B cell (primary cell): ENCODE measurements at regions of chr16 and their contacts with region 1.

Region 1: DNA sequence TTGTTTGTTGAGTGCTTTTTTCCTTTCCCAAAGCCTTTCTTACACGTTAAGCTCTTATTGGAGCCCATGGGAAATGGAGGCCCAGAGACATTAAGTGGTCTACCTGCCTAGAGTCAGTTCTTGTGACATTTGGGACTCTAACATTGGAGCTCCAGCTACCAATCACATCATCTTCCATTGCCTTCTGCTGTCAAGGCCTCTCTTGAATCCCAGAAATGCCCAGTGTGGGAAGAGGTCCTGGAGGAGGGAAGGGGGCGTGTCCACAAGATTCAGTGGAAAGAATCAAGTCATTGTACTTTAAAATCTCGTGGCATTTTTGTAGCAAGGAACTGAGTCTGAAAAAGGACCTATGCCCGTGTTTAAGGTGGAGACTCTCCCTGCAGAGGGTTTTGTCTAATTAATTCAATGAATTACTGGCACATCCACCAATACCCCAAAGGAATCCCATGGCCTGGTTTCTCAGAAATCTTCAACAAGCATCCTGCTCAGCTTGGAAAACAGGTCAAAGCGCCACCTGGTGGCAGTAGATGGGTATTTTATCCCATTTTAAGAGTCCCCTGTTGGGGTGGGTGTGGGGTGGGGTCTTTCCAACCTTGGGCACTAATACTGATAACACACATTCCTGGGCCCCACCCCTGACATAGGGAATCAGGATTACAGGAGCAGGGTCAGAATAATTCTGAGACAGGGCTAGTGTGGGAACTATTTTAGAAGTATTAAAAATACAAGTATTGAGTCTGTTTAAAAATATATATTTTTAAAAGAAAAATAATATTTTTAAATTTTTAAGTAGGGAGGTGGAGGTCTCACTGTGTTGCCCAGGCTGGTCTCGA is 24.6 kb downstream of the GPT2 start:
- DNase-seq: peak; percentile 72
- ATAC-seq: peak; percentile 37
- H3K4me3 ChIP-seq: no peak overlapping the region
- H3K4me3 Mint-ChIP-seq: no peak overlapping the region
- H3K27ac ChIP-seq: no peak overlapping the region
- H3K27ac Mint-ChIP-seq: peak overlapping the region; percentile 74
- H3K4me1 ChIP-seq: peaks cover 40 to 63% of the 10 kb centered on the region in 2 donors
- H3K4me1 Mint-ChIP-seq: peaks cover 49% of the 10 kb centered on the region
- H3K27me3 ChIP-seq: no peaks in the 10 kb centered on the region
- H3K27me3 Mint-ChIP-seq: no peaks in the 10 kb centered on the region
- CTCF ChIP-seq: peak; percentile 85

Region 2: GRCh38 chr16:46700048-46700447 is 208.7 kb before region 1 on chr16:
- CTCF ChIA-PET with region 1: no interaction called
- POLR2A ChIA-PET with region 1: interaction called, 10 read pairs
- intact Hi-C with region 1: no loop called
- DNase-seq: no peak
- ATAC-seq: no peak
- H3K4me3 ChIP-seq: no peak overlapping the region
- H3K4me3 Mint-ChIP-seq: no peak overlapping the region
- H3K27ac ChIP-seq: no peak overlapping the region
- H3K27ac Mint-ChIP-seq: no peak overlapping the region
- H3K4me1 ChIP-seq: no peaks in the 10 kb centered on the region
- H3K4me1 Mint-ChIP-seq: no peaks in the 10 kb centered on the region
- H3K27me3 ChIP-seq: no peaks in the 10 kb centered on the region
- H3K27me3 Mint-ChIP-seq: no peaks in the 10 kb centered on the region
- CTCF ChIP-seq: no peak

Region 3: DNA sequence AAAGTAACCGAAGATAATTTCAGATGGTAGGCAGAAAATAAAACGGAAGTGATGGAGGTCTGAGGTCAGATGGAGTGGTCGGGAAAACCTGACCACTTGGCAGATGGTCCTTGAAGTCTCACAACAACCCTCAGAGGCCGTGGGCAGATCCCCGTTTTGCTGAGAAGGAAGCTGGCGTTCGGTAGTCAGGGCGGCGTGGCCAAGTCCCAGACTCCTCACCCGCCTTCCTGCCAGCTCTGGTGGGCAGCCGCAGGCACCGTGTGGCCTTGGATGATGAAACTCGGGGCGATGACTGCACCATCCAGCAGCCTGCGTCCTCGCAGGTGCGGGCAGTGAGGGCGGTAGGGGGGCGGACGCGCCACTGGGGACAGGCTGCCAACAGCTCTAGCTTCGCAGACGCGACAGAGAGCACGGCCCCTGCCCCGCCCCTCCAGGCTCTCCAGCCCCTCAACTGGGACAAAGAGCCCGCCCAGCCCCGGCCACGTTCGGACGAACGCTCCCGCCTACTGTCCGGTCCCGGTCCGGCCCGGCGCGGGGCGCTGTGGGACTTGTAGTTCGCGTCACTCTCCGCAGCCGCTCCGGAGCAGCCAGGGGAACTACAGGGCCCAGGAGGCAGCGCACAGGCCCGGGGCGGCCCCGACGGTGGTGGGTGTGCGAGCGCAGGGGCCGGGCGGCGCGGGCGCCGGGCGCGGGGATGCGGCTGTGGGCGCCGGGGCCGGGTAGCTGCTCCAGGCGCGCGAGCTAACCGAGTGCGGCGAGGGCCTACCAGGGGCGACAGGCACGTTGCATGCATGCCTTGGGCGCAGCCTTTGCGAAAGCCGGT is 24.9 kb before region 1 on chr16 and contains the start of gene GPT2:
- CTCF ChIA-PET with region 1: interaction called, 45 read pairs
- POLR2A ChIA-PET with region 1: interaction called, 3 read pairs
- intact Hi-C with region 1: loop called (anchors 1 kb)
- DNase-seq: peak; percentile 83
- ATAC-seq: peak; percentile 95
- H3K4me3 ChIP-seq: peak within 1 kb of the TSS; percentile 48 to 84 (median 72)
- H3K4me3 Mint-ChIP-seq: peak within 1 kb of the TSS; percentile 89
- H3K27ac ChIP-seq: no peak within 1 kb of the TSS
- H3K27ac Mint-ChIP-seq: peak within 1 kb of the TSS; percentile 67
- H3K4me1 ChIP-seq: peaks cover 9 to 11% of the 10 kb centered on the region in 2 donors
- H3K4me1 Mint-ChIP-seq: peaks cover 18% of the 10 kb centered on the region
- H3K27me3 ChIP-seq: peaks cover 0 to 5% (median 2%) of the 10 kb centered on the region in 4 experiments
- H3K27me3 Mint-ChIP-seq: no peaks in the 10 kb centered on the region
- CTCF ChIP-seq: no peak
- total RNA-seq, gene GPT2: 9.9 and 11.0 TPM in 2 replicates

Region 4: GRCh38 chr16:46929378-46930332 is 20.9 kb after region 1 on chr16:
- CTCF ChIA-PET with region 1: interaction called, 27 read pairs
- POLR2A ChIA-PET with region 1: no interaction called
- intact Hi-C with region 1: no loop called
- DNase-seq: peak; percentile 76
- ATAC-seq: peak; percentile 73
- H3K4me3 ChIP-seq: no peak overlapping the region
- H3K4me3 Mint-ChIP-seq: no peak overlapping the region
- H3K27ac ChIP-seq: no peak overlapping the region
- H3K27ac Mint-ChIP-seq: no peak overlapping the region
- H3K4me1 ChIP-seq: peaks cover 5 to 18% of the 10 kb centered on the region in 2 donors
- H3K4me1 Mint-ChIP-seq: peaks cover 7% of the 10 kb centered on the region
- H3K27me3 ChIP-seq: no peaks in the 10 kb centered on the region
- H3K27me3 Mint-ChIP-seq: no peaks in the 10 kb centered on the region
- CTCF ChIP-seq: peak; percentile 96

Region 5: DNA sequence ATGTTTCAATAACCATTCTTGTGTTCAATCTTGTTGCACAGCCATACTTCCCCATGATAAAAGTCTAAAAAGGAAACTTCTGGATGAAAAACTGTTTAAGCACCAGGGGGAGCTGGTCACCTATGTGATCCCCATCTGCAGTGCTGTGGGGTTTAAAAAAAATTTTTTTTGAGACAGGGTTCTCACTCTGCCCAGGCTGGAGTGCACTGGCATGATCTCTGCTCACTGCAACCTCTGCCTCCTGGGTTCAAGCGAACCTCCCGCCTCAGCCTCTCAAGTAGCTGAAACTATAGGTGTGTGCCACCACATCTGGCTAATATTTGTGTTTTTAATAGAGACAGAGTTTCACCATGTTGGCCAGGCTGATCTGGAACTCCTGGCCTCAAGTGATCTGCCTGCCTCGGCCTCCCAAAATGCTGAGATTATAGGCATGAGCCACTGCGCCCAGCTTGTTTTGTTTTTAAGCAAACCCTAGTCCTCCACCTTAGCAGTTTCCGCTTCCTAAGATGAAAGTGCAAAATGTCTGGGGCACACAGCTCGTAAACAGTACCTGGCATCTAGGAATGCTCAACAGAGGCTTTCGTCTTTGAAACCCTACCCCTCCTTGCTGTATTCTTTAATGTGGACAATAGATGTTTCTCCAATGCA is 39.3 kb after region 1 on chr16:
- CTCF ChIA-PET with region 1: no interaction called
- POLR2A ChIA-PET with region 1: no interaction called
- intact Hi-C with region 1: no loop called
- DNase-seq: peak; percentile 68
- ATAC-seq: peak; percentile 63
- H3K4me3 ChIP-seq: no peak overlapping the region
- H3K4me3 Mint-ChIP-seq: no peak overlapping the region
- H3K27ac ChIP-seq: no peak overlapping the region
- H3K27ac Mint-ChIP-seq: no peak overlapping the region
- H3K4me1 ChIP-seq: peaks cover 0 to 3% of the 10 kb centered on the region in 2 donors
- H3K4me1 Mint-ChIP-seq: peaks cover 6% of the 10 kb centered on the region
- H3K27me3 ChIP-seq: no peaks in the 10 kb centered on the region
- H3K27me3 Mint-ChIP-seq: no peaks in the 10 kb centered on the region
- CTCF ChIP-seq: peak; percentile 75